GM12878 (cell line): ENCODE measurements at regions of chr10 and their contacts with region 1.

Region 1: GRCh38 chr10:96017191-96017687 is 26.1 kb upstream of the CCNJ start:
- DNase-seq: peak; percentile 32
- ATAC-seq: peak; percentile 99
- H3K4me3 ChIP-seq: no peak overlapping the region
- H3K27ac ChIP-seq: no peak overlapping the region
- H3K4me1 ChIP-seq: no peaks in the 10 kb centered on the region
- H3K27me3 ChIP-seq: no peaks in the 10 kb centered on the region
- CTCF ChIP-seq: peak; percentile 75 to 79 (median 77)
- EP300 ChIP-seq: no peak
- POLR2A ChIP-seq: no peak
- RAD21 ChIP-seq: peak; percentile 90

Region 2: DNA sequence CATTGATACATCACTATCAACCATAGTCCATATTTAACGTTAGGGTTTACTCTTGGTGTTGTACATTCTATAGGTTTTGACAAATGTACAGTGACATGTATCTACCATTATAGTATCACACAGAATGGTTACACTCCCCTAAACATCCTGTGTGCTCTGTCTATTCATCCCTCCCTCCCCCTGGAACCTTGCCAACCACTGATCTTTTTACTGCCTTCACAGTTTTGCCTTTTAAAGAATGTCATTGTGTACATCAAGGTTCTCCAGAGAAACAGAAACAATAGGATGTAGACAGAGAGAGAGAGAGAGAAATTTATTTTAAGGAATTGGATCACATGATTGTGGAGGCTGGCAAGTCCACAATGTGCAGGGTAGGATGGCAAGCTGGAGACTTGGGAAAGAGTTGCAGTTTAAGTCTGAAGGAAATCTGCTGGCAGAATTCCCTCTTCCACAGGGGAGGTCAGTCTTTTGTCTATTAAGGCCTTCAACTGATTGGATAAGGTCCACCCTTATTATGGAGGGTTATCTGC is 18.9 kb before region 1 on chr10:
- CTCF ChIA-PET with region 1: interaction called, 16 read pairs
- POLR2A ChIA-PET with region 1: no interaction called
- RAD21 ChIA-PET with region 1: no interaction called
- SMC1A ChIA-PET with region 1: interaction called, 13 read pairs
- in situ Hi-C with region 1: no loop called
- intact Hi-C with region 1: no loop called
- DNase-seq: no peak
- ATAC-seq: no peak
- H3K4me3 ChIP-seq: no peak overlapping the region
- H3K27ac ChIP-seq: no peak overlapping the region
- H3K4me1 ChIP-seq: peaks cover 3% of the 10 kb centered on the region; the same call in 1 of the 2 replicates
- H3K27me3 ChIP-seq: no peaks in the 10 kb centered on the region
- CTCF ChIP-seq: no peak
- EP300 ChIP-seq: no peak
- POLR2A ChIP-seq: no peak
- RAD21 ChIP-seq: no peak

Region 3: GRCh38 chr10:96129387-96130325 is 112.4 kb after region 1 on chr10 and contains the start of gene ZNF518A:
- CTCF ChIA-PET with region 1: interaction called, 7 read pairs
- POLR2A ChIA-PET with region 1: no interaction called
- RAD21 ChIA-PET with region 1: interaction called, 3 read pairs
- SMC1A ChIA-PET with region 1: no interaction called
- in situ Hi-C with region 1: no loop called
- intact Hi-C with region 1: loop called (anchors 10 kb)
- DNase-seq: peak; percentile 82
- ATAC-seq: peak; percentile 91
- H3K4me3 ChIP-seq: peak within 1 kb of the TSS; percentile 87
- H3K27ac ChIP-seq: peak within 1 kb of the TSS; percentile 100
- H3K4me1 ChIP-seq: no peaks in the 10 kb centered on the region; the same call in 1 of the 2 replicates
- H3K27me3 ChIP-seq: no peaks in the 10 kb centered on the region
- CTCF ChIP-seq: no peak
- EP300 ChIP-seq: no peak
- POLR2A ChIP-seq: peak; percentile 92
- RAD21 ChIP-seq: no peak
- polyA plus RNA-seq, gene ZNF518A: 3.7 to 11.3 TPM

Region 4: GRCh38 chr10:96208271-96208670 is 191.0 kb after region 1 on chr10:
- CTCF ChIA-PET with region 1: interaction called, 16 read pairs
- POLR2A ChIA-PET with region 1: no interaction called
- RAD21 ChIA-PET with region 1: interaction called, 4 read pairs
- SMC1A ChIA-PET with region 1: interaction called, 5 read pairs
- in situ Hi-C with region 1: no loop called
- intact Hi-C with region 1: loop called (anchors 5 kb)
- DNase-seq: peak; percentile 21
- ATAC-seq: peak; percentile 82
- H3K4me3 ChIP-seq: no peak overlapping the region
- H3K27ac ChIP-seq: no peak overlapping the region
- H3K4me1 ChIP-seq: peaks cover 18% of the 10 kb centered on the region
- H3K27me3 ChIP-seq: no peaks in the 10 kb centered on the region
- CTCF ChIP-seq: no peak
- EP300 ChIP-seq: no peak
- POLR2A ChIP-seq: no peak
- RAD21 ChIP-seq: 0 out of 2 replicates have a peak, but pooled peaks have one; percentile 1

Region 5: DNA sequence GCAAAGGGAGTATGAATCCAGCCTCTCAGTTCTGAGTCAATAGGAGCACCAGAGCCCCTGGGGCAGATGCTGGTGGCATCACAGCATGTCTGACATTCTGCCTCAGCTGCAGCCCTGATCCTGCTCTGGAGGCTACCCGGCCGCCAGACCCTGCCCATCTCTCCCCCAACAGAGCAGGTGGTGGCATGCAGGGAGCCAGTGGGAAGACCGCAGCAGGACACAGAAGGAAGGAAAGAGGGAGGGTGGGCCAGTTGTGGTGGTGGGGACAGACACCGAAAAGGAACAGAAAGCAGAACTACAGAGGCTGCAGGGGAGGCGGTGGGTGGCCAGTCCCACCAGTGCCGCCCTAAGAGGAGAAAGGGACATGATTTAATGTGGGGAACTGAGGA is 218.8 kb after region 1 on chr10:
- CTCF ChIA-PET with region 1: interaction called, 3 read pairs
- POLR2A ChIA-PET with region 1: no interaction called
- RAD21 ChIA-PET with region 1: interaction called, 5 read pairs
- SMC1A ChIA-PET with region 1: interaction called, 10 read pairs
- in situ Hi-C with region 1: no loop called
- intact Hi-C with region 1: no loop called
- DNase-seq: no peak
- ATAC-seq: peak; percentile 66
- H3K4me3 ChIP-seq: no peak overlapping the region; the same call in 1 of the 2 replicates
- H3K27ac ChIP-seq: peak overlapping the region; percentile 45; the same call in 1 of the 2 replicates
- H3K4me1 ChIP-seq: peaks cover 37% of the 10 kb centered on the region
- H3K27me3 ChIP-seq: no peaks in the 10 kb centered on the region
- CTCF ChIP-seq: no peak
- EP300 ChIP-seq: no peak
- POLR2A ChIP-seq: no peak
- RAD21 ChIP-seq: no peak

Region 6: DNA sequence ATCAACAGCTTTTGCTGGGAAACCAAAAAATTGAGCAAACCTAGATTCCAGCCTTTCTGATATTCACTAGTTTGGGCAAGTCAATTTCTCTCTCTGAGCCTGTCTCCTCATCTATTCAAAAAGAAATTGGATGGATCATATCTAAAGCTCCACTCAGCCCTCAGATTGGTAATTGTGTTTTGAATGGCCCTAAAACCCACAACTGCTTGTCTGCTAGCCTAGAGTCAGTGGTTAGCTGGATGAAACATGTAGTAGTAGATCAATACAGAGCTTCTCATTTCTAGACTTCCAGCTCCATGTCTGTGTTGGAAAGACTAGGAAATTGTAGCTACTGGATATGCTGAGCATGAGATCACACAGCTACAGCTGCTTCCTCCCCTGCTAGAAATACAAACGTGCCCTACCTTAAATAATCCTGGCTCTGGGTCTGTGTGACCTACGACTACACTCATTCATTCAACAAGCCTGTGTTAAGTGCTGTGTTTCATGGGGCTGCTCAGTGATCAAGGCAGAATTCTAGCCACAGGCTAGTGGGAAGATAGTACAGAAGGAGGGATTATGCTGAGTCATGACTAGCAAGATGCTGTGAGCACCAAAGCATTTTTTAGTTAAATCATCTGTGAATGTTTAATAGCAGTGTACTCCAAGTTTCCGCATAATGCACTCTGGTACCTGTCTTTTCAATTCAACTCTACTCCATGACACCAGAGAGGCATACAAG is 302.7 kb after region 1 on chr10:
- CTCF ChIA-PET with region 1: interaction called, 31 read pairs
- POLR2A ChIA-PET with region 1: no interaction called
- RAD21 ChIA-PET with region 1: interaction called, 6 read pairs
- SMC1A ChIA-PET with region 1: interaction called, 22 read pairs
- in situ Hi-C with region 1: loop called (anchors 10 kb)
- intact Hi-C with region 1: no loop called
- DNase-seq: no peak
- ATAC-seq: no peak
- H3K4me3 ChIP-seq: no peak overlapping the region
- H3K27ac ChIP-seq: no peak overlapping the region
- H3K4me1 ChIP-seq: no peaks in the 10 kb centered on the region
- H3K27me3 ChIP-seq: no peaks in the 10 kb centered on the region
- CTCF ChIP-seq: no peak
- EP300 ChIP-seq: no peak
- POLR2A ChIP-seq: no peak
- RAD21 ChIP-seq: no peak

Region 7: DNA sequence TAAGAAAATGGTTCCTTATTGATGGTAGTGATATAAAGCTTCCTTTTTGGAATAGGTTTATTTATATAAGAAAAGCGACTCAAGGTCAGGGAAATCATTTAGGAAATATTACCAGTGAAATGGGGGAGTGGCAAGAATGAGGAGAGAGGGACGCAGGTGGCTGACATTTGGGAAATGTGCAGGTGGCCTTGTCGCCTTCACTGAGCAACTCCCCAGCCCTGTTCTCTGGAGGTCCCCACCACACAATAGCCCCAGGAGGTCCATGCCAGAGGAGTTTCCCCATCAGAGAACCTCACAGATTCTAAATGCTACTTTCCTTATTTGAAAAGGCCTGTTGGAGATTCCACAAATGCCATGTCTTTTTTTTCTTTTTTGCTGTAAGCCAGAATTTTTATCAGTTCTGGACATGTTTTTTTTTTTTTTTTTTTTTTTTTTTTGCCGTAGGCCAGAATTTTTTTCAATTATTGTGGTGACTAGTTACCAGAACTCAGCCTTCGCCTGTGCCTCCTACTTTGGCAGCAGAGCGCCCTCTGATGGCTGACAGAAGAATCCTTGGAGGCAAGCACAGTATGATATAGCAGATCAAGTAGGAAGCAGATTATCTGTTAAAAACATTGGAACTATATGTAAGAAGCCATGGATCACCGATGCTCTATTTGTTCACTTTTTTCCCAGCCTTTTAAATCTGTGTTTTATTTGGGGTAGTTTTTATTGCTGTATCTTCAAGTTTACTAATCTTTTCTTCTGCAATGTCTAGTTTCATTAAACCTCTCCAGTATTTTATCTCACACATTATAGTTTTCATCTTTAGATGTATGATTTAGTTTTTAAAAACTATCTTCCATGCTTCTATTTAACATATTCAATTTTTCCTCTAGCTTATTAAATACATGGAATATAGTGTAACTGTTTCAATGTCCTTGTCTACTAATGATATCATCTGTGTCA is 323.0 kb after region 1 on chr10:
- CTCF ChIA-PET with region 1: interaction called, 142 read pairs
- POLR2A ChIA-PET with region 1: no interaction called
- RAD21 ChIA-PET with region 1: interaction called, 24 read pairs
- SMC1A ChIA-PET with region 1: interaction called, 27 read pairs
- in situ Hi-C with region 1: no loop called
- intact Hi-C with region 1: loop called (anchors 1 kb)
- DNase-seq: no peak
- ATAC-seq: peak; percentile 95
- H3K4me3 ChIP-seq: no peak overlapping the region
- H3K27ac ChIP-seq: no peak overlapping the region
- H3K4me1 ChIP-seq: no peaks in the 10 kb centered on the region
- H3K27me3 ChIP-seq: no peaks in the 10 kb centered on the region
- CTCF ChIP-seq: peak; percentile 68 to 85 (median 82)
- EP300 ChIP-seq: no peak
- POLR2A ChIP-seq: no peak
- RAD21 ChIP-seq: peak; percentile 89